HepG2 (cell line): ENCODE measurements at regions of chr7 and their contacts with region 1.

Region 1: GRCh38 chr7:99843808-99844207 is 16.0 kb downstream of the CYP3A43 start:
- DNase-seq: peak; percentile 83
- ATAC-seq: peak; percentile 57
- H3K4me3 ChIP-seq: no peak overlapping the region
- H3K27ac ChIP-seq: peak overlapping the region; percentile 30
- H3K4me1 ChIP-seq: peaks cover 20% of the 10 kb centered on the region
- H3K27me3 ChIP-seq: no peaks in the 10 kb centered on the region
- CTCF ChIP-seq: no peak
- EP300 ChIP-seq: 0 out of 4 replicates have a peak, but pooled peaks of 1 of the 2 experiments have one; percentile 48
- POLR2A ChIP-seq: no peak
- RAD21 ChIP-seq: no peak

Region 2: GRCh38 chr7:99860281-99861127 is 16.7 kb after region 1 on chr7:
- CTCF ChIA-PET with region 1: no interaction called
- POLR2A ChIA-PET with region 1: interaction called, 16 read pairs
- in situ Hi-C with region 1: no loop called
- intact Hi-C with region 1: no loop called
- DNase-seq: peak; percentile 97
- ATAC-seq: peak; percentile 98
- H3K4me3 ChIP-seq: peak overlapping the region in 2 of 3 experiments; percentile 1 to 46; a peak in 4 of 6 replicates
- H3K27ac ChIP-seq: peak overlapping the region; percentile 92
- H3K4me1 ChIP-seq: peaks cover 73% of the 10 kb centered on the region
- H3K27me3 ChIP-seq: no peaks in the 10 kb centered on the region
- CTCF ChIP-seq: no peak
- EP300 ChIP-seq: peak in 1 of 2 experiments; percentile 86; a peak in 2 of 4 replicates
- POLR2A ChIP-seq: peak in 1 of 2 experiments; percentile 60; a peak in 2 of 4 replicates
- RAD21 ChIP-seq: no peak

Region 3: DNA sequence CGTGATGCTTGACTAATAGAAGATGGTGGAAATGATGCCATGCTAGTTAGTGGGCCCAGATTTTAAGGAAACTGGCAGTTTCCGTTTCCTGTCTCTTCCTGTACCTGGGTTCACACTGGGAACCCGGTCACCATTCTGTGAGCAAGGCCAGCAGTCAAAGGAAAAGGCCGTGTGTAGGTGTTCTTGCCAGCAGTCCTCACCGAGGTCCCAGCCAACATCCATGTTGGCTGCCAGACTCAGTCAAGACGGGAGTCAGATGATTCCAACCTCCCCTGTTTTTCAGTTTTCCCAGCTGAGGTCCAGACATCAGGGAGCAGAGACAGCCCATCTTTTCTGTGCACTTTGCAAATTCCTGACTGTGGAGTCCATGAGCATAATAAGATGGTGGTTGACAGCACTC is 499.0 kb after region 1 on chr7:
- CTCF ChIA-PET with region 1: no interaction called
- POLR2A ChIA-PET with region 1: no interaction called
- in situ Hi-C with region 1: no loop called
- intact Hi-C with region 1: no loop called
- DNase-seq: no peak
- ATAC-seq: no peak
- H3K4me3 ChIP-seq: no peak overlapping the region
- H3K27ac ChIP-seq: no peak overlapping the region
- H3K4me1 ChIP-seq: peaks cover 16% of the 10 kb centered on the region
- H3K27me3 ChIP-seq: no peaks in the 10 kb centered on the region
- CTCF ChIP-seq: no peak
- EP300 ChIP-seq: no peak
- POLR2A ChIP-seq: no peak
- RAD21 ChIP-seq: no peak